ENCODE measurements at regions of chr20 and their contacts with region 1.

Region 1: DNA sequence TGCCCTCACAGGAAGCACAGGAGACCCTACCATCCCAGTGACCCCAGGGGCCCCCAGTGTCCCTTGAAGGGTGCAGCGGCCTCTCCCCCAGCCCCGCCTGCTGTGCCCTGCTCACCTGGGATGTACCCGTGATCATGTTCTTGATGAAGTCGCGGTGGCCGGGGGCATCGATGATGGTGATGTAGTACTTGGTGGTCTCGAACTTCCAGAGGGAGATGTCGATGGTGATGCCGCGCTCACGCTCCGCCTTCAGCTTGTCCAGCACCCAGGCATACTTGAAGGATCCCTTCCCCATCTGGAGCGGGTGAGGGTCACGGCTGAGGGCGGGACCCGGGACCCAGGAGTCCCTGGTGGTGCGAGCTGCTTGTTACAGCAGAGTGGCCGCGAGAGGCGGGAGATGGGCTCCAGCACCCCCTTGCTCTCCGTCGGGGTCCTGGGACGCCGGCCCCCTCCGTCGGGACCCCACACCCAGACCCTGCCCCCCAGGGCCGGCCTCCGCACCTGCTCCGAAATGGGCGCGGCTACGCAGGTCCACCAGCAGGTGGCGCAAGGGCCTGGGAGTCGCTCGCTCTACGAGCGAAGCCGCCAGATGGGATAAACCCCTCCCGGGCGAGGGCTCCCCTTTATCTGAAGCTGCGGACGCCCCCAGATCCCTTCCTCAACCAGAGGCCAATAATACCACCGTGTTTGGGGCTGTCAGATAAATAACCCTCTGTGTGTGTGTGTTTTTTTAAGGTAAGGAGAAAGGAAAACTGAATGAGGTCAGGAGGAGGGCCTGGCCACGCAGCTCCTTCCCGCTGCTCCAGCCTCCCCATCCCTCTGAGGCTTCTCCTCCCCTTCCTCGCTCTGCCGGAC is 2.9 kb downstream of the EEF1A2 start:
- DNase-seq: peak in 1 of 2 experiments; percentile 92
- H3K4me3 ChIP-seq: peak overlapping the region in 2 of 4 experiments; percentile 10 to 41; a peak in 4 of 8 replicates
- H3K27ac ChIP-seq: no peak overlapping the region
- H3K4me1 ChIP-seq: peaks cover 0 to 23% (median 12%) of the 10 kb centered on the region in 4 experiments; a peak in 6 of 7 replicates
- H3K27me3 ChIP-seq: peaks cover 11 to 41% (median 35%) of the 10 kb centered on the region in 4 experiments
- CTCF ChIP-seq: peak; percentile 83 to 88 (median 87)
- EP300 ChIP-seq: no peak
- POLR2A ChIP-seq: no peak
- RAD21 ChIP-seq: peak; percentile 51 to 67; a peak in 3 of 4 replicates

Region 2: GRCh38 chr20:63463400-63464288 is 32.3 kb before region 1 on chr20:
- CTCF ChIA-PET with region 1: interaction called, 21 read pairs
- POLR2A ChIA-PET with region 1: no interaction called
- DNase-seq: no peak
- H3K4me3 ChIP-seq: no peak overlapping the region
- H3K27ac ChIP-seq: no peak overlapping the region
- H3K4me1 ChIP-seq: peaks cover 0 to 4% (median 3%) of the 10 kb centered on the region in 4 experiments; a peak in 5 of 7 replicates
- H3K27me3 ChIP-seq: no peaks in the 10 kb centered on the region
- CTCF ChIP-seq: no peak
- EP300 ChIP-seq: no peak
- POLR2A ChIP-seq: no peak
- RAD21 ChIP-seq: no peak

Region 3: DNA sequence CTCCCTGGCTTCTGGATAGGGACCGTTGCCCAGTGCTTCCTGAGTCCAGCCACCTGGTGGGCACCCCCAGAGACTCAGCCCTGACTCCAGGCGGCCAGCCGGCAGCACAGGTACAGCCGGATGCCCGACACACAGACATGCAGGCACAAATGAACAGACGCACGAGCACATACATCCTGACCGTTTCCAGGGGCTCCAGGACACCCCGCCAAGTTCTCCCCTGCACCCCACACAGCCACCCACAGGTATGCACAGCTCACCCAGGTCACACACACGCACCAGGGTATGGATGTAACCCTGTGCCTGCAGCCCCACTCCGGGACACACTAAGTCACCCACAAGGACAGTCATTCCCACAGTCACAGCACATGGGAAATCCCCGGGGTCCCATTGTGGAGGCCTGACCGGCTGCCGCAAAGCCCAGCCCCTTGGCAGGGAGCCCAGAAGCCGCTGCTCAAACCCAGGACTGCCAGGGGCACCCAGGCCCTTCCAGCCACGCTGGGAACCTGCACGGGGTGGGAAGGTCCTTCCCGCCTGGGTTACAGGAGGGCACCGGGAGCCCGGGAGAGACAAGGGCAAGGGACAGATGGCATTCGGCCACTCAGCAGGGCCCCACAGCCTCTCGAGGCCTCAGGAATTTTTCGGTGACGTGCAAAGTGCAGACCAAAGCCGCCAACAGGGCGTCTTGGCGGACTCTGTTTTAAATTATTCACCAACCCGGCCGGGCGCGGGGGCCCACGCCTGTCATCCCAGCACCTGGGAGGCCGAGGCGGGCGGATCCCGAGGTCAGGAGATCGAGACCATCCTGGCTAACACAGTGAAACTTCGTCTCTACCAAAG is 12.9 kb before region 1 on chr20:
- CTCF ChIA-PET with region 1: interaction called, 39 read pairs
- POLR2A ChIA-PET with region 1: interaction called, 4 read pairs
- DNase-seq: no peak
- H3K4me3 ChIP-seq: no peak overlapping the region
- H3K27ac ChIP-seq: no peak overlapping the region
- H3K4me1 ChIP-seq: peaks cover 0 to 24% (median 13%) of the 10 kb centered on the region in 4 experiments; a peak in 5 of 7 replicates
- H3K27me3 ChIP-seq: peaks cover 0 to 7% (median 4%) of the 10 kb centered on the region in 4 experiments; a peak in 4 of 7 replicates
- CTCF ChIP-seq: no peak
- EP300 ChIP-seq: no peak
- POLR2A ChIP-seq: no peak
- RAD21 ChIP-seq: no peak

Region 4: DNA sequence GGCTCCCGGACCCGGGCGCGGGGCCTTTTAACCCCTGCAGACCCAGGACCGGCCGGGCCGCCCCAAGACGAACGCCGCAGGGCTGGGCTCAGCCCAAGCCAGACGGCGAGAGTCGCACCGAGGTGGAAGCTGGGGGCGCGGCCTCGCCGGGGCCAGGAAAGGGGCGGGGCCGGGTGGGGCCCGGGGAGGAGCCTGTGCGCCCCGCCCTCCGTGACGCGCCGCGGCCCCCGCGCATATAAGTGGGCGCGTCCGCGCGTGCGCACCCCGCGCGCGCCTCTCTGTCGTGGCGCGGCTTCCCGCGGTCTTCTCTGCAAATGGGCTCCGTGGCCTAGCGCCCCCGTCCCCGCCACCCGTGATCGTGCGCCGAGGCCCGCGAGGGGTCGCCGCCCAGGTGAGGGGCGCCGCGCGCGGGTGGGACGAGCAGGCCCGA is 24.6 kb after region 1 on chr20 and contains the start of gene PPDPF:
- CTCF ChIA-PET with region 1: interaction called, 31 read pairs
- POLR2A ChIA-PET with region 1: interaction called, 22 read pairs
- DNase-seq: peak; percentile 39 to 88
- H3K4me3 ChIP-seq: peak within 1 kb of the TSS; percentile 66 to 99 (median 88)
- H3K27ac ChIP-seq: peak within 1 kb of the TSS; percentile 87
- H3K4me1 ChIP-seq: peaks cover 0 to 21% (median 10%) of the 10 kb centered on the region in 4 experiments; a peak in 5 of 7 replicates
- H3K27me3 ChIP-seq: peaks cover 0 to 6% (median under 1%) of the 10 kb centered on the region in 4 experiments; a peak in 2 of 7 replicates
- CTCF ChIP-seq: no peak
- EP300 ChIP-seq: no peak
- POLR2A ChIP-seq: peak; percentile 70 to 87
- RAD21 ChIP-seq: no peak
- total RNA-seq, gene PPDPF: 125 and 138 TPM in 2 replicates

Measured in H1 (cell line).